ENCODE measurements at regions of chr2 and their contacts with region 1.

Region 1: DNA sequence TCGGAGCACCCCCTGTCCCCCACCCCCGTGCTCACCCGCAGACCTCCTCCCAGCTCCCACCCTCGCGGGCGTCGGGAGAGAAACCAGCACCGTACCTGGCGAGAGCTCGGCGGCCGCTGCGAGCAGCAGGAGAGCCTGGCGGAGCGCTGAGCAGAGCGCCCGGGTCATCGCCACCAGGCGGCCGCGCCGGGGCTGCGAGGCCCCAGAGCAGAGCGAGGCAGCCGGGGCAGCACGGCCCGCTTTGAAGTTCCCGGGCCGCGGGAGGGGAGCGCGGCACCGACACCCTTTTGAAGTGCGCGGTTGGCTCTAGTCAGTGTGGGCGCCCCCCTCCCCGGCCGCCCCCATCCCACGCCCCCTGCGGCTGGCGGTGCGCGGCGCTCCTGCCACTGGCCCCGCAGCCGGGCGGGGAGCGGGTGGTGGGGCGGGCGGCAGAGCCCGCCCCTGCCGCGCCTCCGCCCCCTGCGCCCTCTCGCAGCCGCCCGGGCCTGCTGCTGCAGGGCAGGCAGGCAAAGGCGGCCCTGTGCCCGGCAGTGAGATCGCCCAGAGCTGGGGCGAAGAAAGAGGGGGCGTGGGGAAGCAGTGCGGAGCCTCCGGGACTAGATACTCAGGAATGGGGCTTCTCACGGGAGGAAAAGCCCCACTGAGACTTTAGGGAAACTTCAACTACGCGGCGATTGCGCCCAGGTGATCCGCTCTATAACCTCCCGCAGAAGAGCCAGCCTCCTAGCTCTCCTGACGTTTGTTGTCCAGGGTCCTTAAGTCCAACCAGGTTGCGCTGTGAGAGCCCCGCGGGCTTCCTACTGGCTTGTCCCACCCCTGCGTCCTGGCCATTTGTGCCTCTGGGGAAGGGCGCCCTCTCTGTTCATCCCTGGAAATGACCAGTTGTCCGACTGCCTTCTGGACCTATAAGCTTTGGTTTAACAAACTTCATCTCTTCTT is at the start of gene ACVR1C:
- DNase-seq: peak; percentile 55 to 78 (median 70)
- ATAC-seq: peak; percentile 86
- H3K4me3 ChIP-seq: peak within 1 kb of the TSS; percentile 85
- H3K4me3 Mint-ChIP-seq: peak within 1 kb of the TSS; percentile 91 to 99 (median 96)
- H3K27ac ChIP-seq: peak within 1 kb of the TSS; percentile 79
- H3K27ac Mint-ChIP-seq: peak within 1 kb of the TSS; percentile 78 to 94 (median 89)
- H3K4me1 ChIP-seq: peaks cover 4 to 24% of the 10 kb centered on the region in 2 donors
- H3K4me1 Mint-ChIP-seq: peaks cover 18 to 44% (median 39%) of the 10 kb centered on the region in 7 donors
- H3K27me3 ChIP-seq: no peaks in the 10 kb centered on the region
- H3K27me3 Mint-ChIP-seq: peaks cover 0 to 36% (median 0%) of the 10 kb centered on the region in 5 donors
- total RNA-seq, gene ACVR1C: 0.73 to 11.4 (median 8.9) TPM

Region 2: DNA sequence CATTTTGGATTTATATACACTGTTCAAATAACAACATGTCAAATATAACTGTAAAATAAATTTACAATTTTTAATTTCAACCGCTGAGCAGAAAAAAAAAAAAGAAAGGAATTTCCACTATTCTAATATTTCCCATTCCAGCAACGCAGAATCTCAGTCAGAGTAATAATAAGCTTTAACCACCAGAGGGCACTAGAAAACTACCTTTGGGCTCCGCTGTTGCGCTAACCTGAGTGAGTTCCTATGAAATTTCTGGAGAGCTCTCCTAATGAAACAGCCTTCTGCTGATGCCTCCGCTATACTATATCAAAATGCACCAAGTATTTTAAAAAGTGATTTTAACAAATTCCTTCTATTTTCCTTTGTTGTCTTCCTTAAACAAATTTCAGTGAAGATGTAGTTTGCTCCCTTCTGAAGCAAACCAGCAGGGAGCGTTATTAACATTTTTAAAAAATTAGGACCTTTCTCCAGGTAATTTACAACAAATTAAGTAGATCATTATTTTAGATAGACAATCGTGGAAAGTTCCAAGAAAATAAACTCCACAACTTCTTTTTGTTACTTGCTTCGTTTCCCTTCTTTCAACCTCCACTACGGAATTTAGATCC is 326.1 kb before region 1 on chr2:
- CTCF ChIA-PET with region 1: interaction called, 16 read pairs
- POLR2A ChIA-PET with region 1: interaction called, 3 read pairs
- intact Hi-C with region 1: loop called (anchors 1 kb)
- DNase-seq: peak in 7 of 9 donors; percentile 33 to 72 (median 59)
- ATAC-seq: peak; percentile 89
- H3K4me3 ChIP-seq: no peak overlapping the region
- H3K4me3 Mint-ChIP-seq: peak overlapping the region in 4 of 10 donors; percentile 16 to 54 (median 38)
- H3K27ac ChIP-seq: no peak overlapping the region
- H3K27ac Mint-ChIP-seq: no peak overlapping the region
- H3K4me1 ChIP-seq: peaks cover 0 to 9% of the 10 kb centered on the region in 2 donors
- H3K4me1 Mint-ChIP-seq: peaks cover 7 to 33% (median 23%) of the 10 kb centered on the region in 7 donors
- H3K27me3 ChIP-seq: no peaks in the 10 kb centered on the region
- H3K27me3 Mint-ChIP-seq: peaks cover 0 to 25% (median 0%) of the 10 kb centered on the region in 5 donors

Region 3: GRCh38 chr2:157443795-157444640 is 184.7 kb before region 1 on chr2 and contains the start of gene CYTIP:
- CTCF ChIA-PET with region 1: no interaction called
- POLR2A ChIA-PET with region 1: interaction called, 3 read pairs
- intact Hi-C with region 1: loop called in 1 of 2 experiments (anchors 2 kb)
- DNase-seq: peak; percentile 32 to 85 (median 78)
- ATAC-seq: peak; percentile 71
- H3K4me3 ChIP-seq: peak within 1 kb of the TSS; percentile 97
- H3K4me3 Mint-ChIP-seq: peak within 1 kb of the TSS; percentile 92 to 100 (median 97)
- H3K27ac ChIP-seq: peak within 1 kb of the TSS; percentile 89
- H3K27ac Mint-ChIP-seq: peak within 1 kb of the TSS; percentile 95 to 100 (median 98)
- H3K4me1 ChIP-seq: peaks cover 30 to 34% of the 10 kb centered on the region in 2 donors
- H3K4me1 Mint-ChIP-seq: peaks cover 32 to 48% (median 46%) of the 10 kb centered on the region in 7 donors
- H3K27me3 ChIP-seq: no peaks in the 10 kb centered on the region
- H3K27me3 Mint-ChIP-seq: no peaks in the 10 kb centered on the region
- total RNA-seq, gene CYTIP: 290 to 406 (median 363) TPM

Region 4: DNA sequence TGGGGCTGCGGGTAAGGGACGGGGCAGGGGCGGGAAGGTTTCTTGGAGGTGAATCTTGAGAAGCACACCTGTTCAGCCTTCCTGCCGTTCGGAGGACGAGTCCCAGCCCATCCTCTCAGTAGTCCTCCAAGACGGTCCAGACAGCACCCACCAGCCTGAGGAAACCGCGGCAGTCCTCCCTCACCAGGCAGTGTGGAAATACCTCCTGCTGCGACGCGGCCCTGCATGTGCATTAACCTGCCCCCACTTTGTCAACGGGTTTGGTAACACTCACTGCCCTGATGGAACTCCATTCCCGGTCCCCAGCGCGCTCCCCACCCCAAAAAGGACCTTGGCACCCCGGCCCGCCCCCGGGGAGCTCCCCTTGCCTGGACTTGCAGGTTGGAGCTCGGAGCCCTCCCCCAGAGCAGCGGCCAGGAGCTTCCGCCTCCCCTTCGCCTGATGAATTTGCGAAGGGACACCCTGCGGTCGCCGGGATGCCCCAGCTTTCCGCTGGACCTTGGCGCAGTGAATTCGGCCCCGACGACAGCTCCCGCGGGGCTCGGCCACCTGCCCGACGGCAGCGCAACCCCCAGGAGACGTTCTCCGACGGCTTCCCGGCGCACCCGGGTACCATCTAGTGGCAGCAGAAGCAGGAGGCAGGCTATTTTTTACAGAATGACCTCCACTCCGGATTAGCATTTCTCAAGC is 31.6 kb before region 1 on chr2:
- CTCF ChIA-PET with region 1: interaction called, 4 read pairs
- POLR2A ChIA-PET with region 1: interaction called, 3 read pairs
- intact Hi-C with region 1: loop called in 1 of 2 experiments (anchors 1 kb)
- DNase-seq: peak; percentile 32 to 60 (median 53)
- ATAC-seq: peak; percentile 80
- H3K4me3 ChIP-seq: no peak overlapping the region
- H3K4me3 Mint-ChIP-seq: peak overlapping the region; percentile 61 to 81 (median 72)
- H3K27ac ChIP-seq: no peak overlapping the region
- H3K27ac Mint-ChIP-seq: peak overlapping the region in 2 of 9 donors; percentile 21 to 65
- H3K4me1 ChIP-seq: no peaks in the 10 kb centered on the region
- H3K4me1 Mint-ChIP-seq: peaks cover 9 to 30% (median 20%) of the 10 kb centered on the region in 7 donors
- H3K27me3 ChIP-seq: no peaks in the 10 kb centered on the region
- H3K27me3 Mint-ChIP-seq: peaks cover 0 to 37% (median 0%) of the 10 kb centered on the region in 5 donors

Region 5: GRCh38 chr2:157662401-157662800 is 33.7 kb after region 1 on chr2:
- CTCF ChIA-PET with region 1: no interaction called
- POLR2A ChIA-PET with region 1: no interaction called
- intact Hi-C with region 1: no loop called
- DNase-seq: no peak
- ATAC-seq: no peak
- H3K4me3 ChIP-seq: no peak overlapping the region
- H3K4me3 Mint-ChIP-seq: no peak overlapping the region
- H3K27ac ChIP-seq: no peak overlapping the region
- H3K27ac Mint-ChIP-seq: no peak overlapping the region
- H3K4me1 ChIP-seq: no peaks in the 10 kb centered on the region
- H3K4me1 Mint-ChIP-seq: no peaks in the 10 kb centered on the region
- H3K27me3 ChIP-seq: no peaks in the 10 kb centered on the region
- H3K27me3 Mint-ChIP-seq: no peaks in the 10 kb centered on the region

Region 6: DNA sequence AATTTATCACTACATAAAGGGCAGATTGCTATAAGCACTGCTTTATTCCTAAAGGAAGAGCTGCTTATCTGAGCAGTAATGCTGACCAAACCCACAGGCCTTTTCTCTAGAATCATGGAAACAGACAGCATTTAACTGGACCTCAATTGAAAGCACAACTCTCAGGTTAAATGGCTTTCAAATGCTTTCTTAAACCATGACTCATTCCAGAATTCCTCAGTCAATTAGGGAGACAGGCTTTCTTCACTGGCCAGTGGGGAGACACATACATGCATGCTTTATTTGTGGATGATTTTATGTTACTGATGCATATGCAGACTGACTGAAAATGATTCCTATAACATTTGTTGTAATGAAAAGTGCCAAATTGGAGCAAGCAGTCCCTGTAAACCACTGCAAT is 132.8 kb after region 1 on chr2:
- CTCF ChIA-PET with region 1: no interaction called
- POLR2A ChIA-PET with region 1: no interaction called
- intact Hi-C with region 1: loop called in 1 of 2 experiments (anchors 5 kb)
- DNase-seq: no peak
- ATAC-seq: no peak
- H3K4me3 ChIP-seq: no peak overlapping the region
- H3K4me3 Mint-ChIP-seq: no peak overlapping the region
- H3K27ac ChIP-seq: no peak overlapping the region
- H3K27ac Mint-ChIP-seq: no peak overlapping the region
- H3K4me1 ChIP-seq: no peaks in the 10 kb centered on the region
- H3K4me1 Mint-ChIP-seq: peaks cover 0 to 2% (median 0%) of the 10 kb centered on the region in 7 donors
- H3K27me3 ChIP-seq: no peaks in the 10 kb centered on the region
- H3K27me3 Mint-ChIP-seq: no peaks in the 10 kb centered on the region

Region 7: GRCh38 chr2:158456309-158457066 is 827.7 kb after region 1 on chr2 and contains the starts of genes CCDC148 and PKP4:
- CTCF ChIA-PET with region 1: interaction called, 3 read pairs
- POLR2A ChIA-PET with region 1: no interaction called
- intact Hi-C with region 1: loop called (anchors 1 to 5 kb)
- DNase-seq: peak; percentile 70 to 94 (median 87)
- ATAC-seq: peak; percentile 95
- H3K4me3 ChIP-seq: peak within 1 kb of the TSS; percentile 79
- H3K4me3 Mint-ChIP-seq: peak within 1 kb of the TSS; percentile 88 to 97 (median 94)
- H3K27ac ChIP-seq: peak within 1 kb of the TSS; percentile 70
- H3K27ac Mint-ChIP-seq: peak within 1 kb of the TSS; percentile 70 to 89 (median 82)
- H3K4me1 ChIP-seq: peaks cover 0 to 11% of the 10 kb centered on the region in 2 donors
- H3K4me1 Mint-ChIP-seq: peaks cover 13 to 27% (median 22%) of the 10 kb centered on the region in 7 donors
- H3K27me3 ChIP-seq: no peaks in the 10 kb centered on the region
- H3K27me3 Mint-ChIP-seq: peaks cover 0 to 52% (median 6%) of the 10 kb centered on the region in 5 donors
- total RNA-seq, gene CCDC148: 0.54 TPM in 1 of 5 experiments, not detected in the others
- total RNA-seq, gene PKP4: 15.1 to 33.2 (median 23.2) TPM

Measured in naive thymus-derived CD4-positive, alpha-beta T cell (primary cell).